ENCODE measurements at regions of chr4 and their contacts with region 1.

Region 1: GRCh38 chr4:48127682-48128394 is 6.2 kb downstream of the TXK start:
- DNase-seq: peak; percentile 34 to 70
- ATAC-seq: peak; percentile 67 to 91 (median 84)
- H3K4me3 ChIP-seq: peak overlapping the region in 5 of 10 donors; percentile 13 to 32 (median 16)
- H3K27ac ChIP-seq: peak overlapping the region in 7 of 10 donors; percentile 25 to 72 (median 42)
- H3K4me1 ChIP-seq: peaks cover 0 to 51% (median 18%) of the 10 kb centered on the region in 9 donors
- H3K27me3 ChIP-seq: no peaks in the 10 kb centered on the region
- CTCF ChIP-seq: peak; percentile 30 to 70 (median 60)

Region 2: DNA sequence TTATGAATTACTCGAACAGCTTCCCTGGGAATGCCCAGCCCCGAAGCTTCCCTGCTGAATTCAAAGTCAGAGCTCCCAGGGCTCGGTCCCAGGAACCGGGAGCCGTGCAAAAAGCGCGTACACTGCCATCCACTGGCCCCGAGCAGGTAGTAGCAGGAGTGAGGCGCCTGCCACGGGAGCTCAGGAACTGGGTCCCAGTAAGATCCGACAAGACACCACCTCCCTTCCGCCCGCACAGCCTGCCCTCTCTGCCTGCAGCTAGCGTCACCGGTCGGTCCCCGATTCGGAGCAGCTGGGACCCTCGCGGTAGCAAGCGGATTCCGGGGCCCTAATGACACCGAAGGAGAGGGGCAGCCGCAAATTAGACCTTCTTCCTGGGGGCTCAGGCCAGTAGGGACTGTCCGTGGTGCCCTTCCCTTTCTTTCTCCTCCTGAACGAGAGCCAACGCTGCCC is 291.2 kb before region 1 on chr4:
- intact Hi-C with region 1: no loop called
- DNase-seq: peak; percentile 71 to 82
- ATAC-seq: peak; percentile 91 to 96 (median 94)
- H3K4me3 ChIP-seq: peak overlapping the region; percentile 32 to 77 (median 62)
- H3K27ac ChIP-seq: peak overlapping the region; percentile 6 to 86 (median 65)
- H3K4me1 ChIP-seq: peaks cover 2 to 44% (median 31%) of the 10 kb centered on the region in 9 donors
- H3K27me3 ChIP-seq: peaks cover 0 to 28% (median 4%) of the 10 kb centered on the region in 7 donors
- CTCF ChIP-seq: peak; percentile 35 to 84 (median 67)

Region 3: DNA sequence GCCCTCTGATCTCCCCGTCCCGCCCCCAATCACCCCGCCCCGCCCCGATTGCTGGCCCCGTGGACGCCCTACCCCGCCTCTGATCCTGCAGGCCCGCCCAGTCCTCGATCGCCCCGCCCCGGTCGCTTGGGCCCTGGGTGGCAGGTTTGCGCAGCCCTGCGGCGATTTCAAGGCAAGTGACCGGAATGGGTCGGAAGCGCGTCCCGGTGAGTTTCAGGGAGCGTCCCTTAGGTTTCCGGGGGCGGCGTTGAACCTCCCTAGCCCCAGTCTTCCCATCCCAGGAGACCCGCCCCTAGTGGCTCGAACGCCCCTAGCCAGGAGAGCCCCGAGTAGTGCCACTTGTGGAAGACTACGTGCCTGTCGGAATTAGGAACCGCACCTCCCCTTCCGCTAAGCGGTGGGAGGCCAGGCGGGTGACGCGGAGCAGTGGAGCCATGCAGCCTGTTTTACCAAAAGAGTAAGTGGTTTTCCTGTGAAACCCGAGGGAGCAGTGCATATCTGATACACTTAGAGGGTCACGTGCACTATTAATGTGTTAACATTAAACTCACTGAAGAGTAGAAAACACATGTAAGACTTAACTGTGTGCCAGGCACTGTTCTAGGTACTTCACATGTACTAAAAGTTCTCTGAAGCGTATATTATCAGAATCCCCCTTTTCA is 142.2 kb after region 1 on chr4:
- intact Hi-C with region 1: loop called in 6 of 10 experiments (anchors 5 to 10 kb)
- DNase-seq: peak; percentile 91 to 93
- ATAC-seq: peak; percentile 98 to 99 (median 99)
- H3K4me3 ChIP-seq: peak overlapping the region; percentile 71 to 92 (median 88)
- H3K27ac ChIP-seq: peak overlapping the region in 9 of 10 donors; percentile 71 to 93 (median 80)
- H3K4me1 ChIP-seq: peaks cover 0 to 35% (median 8%) of the 10 kb centered on the region in 9 donors
- H3K27me3 ChIP-seq: no peaks in the 10 kb centered on the region
- CTCF ChIP-seq: peak in 5 of 9 donors; percentile 15 to 42 (median 34)

Region 4: GRCh38 chr4:48275247-48275646 is 147.4 kb after region 1 on chr4:
- intact Hi-C with region 1: loop called in 6 of 10 experiments (anchors 5 to 10 kb)
- DNase-seq: no peak
- ATAC-seq: peak in 2 of 8 donors; percentile 45 to 52
- H3K4me3 ChIP-seq: no peak overlapping the region
- H3K27ac ChIP-seq: no peak overlapping the region
- H3K4me1 ChIP-seq: peaks cover 0 to 10% (median 0%) of the 10 kb centered on the region in 9 donors
- H3K27me3 ChIP-seq: no peaks in the 10 kb centered on the region
- CTCF ChIP-seq: peak in 7 of 9 donors; percentile 31 to 65 (median 53)

Region 5: GRCh38 chr4:48546336-48546735 is 418.5 kb after region 1 on chr4:
- intact Hi-C with region 1: loop called in 1 of 10 experiments (anchors 5 kb)
- DNase-seq: no peak
- ATAC-seq: no peak
- H3K4me3 ChIP-seq: no peak overlapping the region
- H3K27ac ChIP-seq: no peak overlapping the region
- H3K4me1 ChIP-seq: no peaks in the 10 kb centered on the region
- H3K27me3 ChIP-seq: no peaks in the 10 kb centered on the region
- CTCF ChIP-seq: peak; percentile 8 to 72 (median 56)

Region 6: GRCh38 chr4:48602222-48602621 is 474.4 kb after region 1 on chr4:
- intact Hi-C with region 1: no loop called
- DNase-seq: no peak
- ATAC-seq: no peak
- H3K4me3 ChIP-seq: no peak overlapping the region
- H3K27ac ChIP-seq: no peak overlapping the region
- H3K4me1 ChIP-seq: peaks cover 0 to 17% (median 8%) of the 10 kb centered on the region in 9 donors
- H3K27me3 ChIP-seq: no peaks in the 10 kb centered on the region
- CTCF ChIP-seq: no peak